ENCODE measurements at regions of chr22 and their contacts with region 1.

Region 1: GRCh38 chr22:25540166-25540907 is 24.1 kb upstream of the GRK3 start:
- DNase-seq: no peak
- ATAC-seq: no peak
- H3K4me3 ChIP-seq: no peak overlapping the region
- H3K4me3 Mint-ChIP-seq: no peak overlapping the region
- H3K27ac ChIP-seq: no peak overlapping the region
- H3K27ac Mint-ChIP-seq: no peak overlapping the region
- H3K4me1 ChIP-seq: peaks cover 8 to 10% of the 10 kb centered on the region in 2 donors
- H3K4me1 Mint-ChIP-seq: peaks cover 14% of the 10 kb centered on the region
- H3K27me3 ChIP-seq: no peaks in the 10 kb centered on the region
- H3K27me3 Mint-ChIP-seq: no peaks in the 10 kb centered on the region
- CTCF ChIP-seq: no peak

Region 2: GRCh38 chr22:25465949-25466348 is 74.4 kb before region 1 on chr22:
- CTCF ChIA-PET with region 1: interaction called, 36 read pairs
- POLR2A ChIA-PET with region 1: no interaction called
- intact Hi-C with region 1: no loop called
- DNase-seq: no peak
- ATAC-seq: no peak
- H3K4me3 ChIP-seq: no peak overlapping the region
- H3K4me3 Mint-ChIP-seq: no peak overlapping the region
- H3K27ac ChIP-seq: no peak overlapping the region
- H3K27ac Mint-ChIP-seq: no peak overlapping the region
- H3K4me1 ChIP-seq: no peaks in the 10 kb centered on the region
- H3K4me1 Mint-ChIP-seq: no peaks in the 10 kb centered on the region
- H3K27me3 ChIP-seq: no peaks in the 10 kb centered on the region
- H3K27me3 Mint-ChIP-seq: no peaks in the 10 kb centered on the region
- CTCF ChIP-seq: no peak

Region 3: DNA sequence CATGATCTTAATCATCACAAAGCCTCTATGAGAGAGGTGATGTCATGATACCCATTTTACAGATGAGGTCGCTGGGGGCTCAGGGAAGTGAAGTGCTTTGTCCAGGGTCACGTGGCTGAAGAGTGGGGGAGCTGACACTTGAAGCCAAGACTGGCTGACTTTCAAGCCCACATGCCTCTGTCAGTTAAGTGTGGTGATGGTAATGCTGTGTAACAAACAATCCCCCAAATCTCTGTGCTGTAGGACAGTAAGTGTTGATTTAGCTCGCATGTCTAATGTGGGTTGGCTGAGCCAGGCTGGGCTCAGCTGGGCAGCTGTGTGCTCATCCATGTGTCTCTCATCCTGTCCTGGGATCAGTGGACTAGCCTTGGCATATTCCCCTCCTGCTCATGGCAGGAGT is 63.0 kb before region 1 on chr22:
- CTCF ChIA-PET with region 1: no interaction called
- POLR2A ChIA-PET with region 1: no interaction called
- intact Hi-C with region 1: no loop called
- DNase-seq: no peak
- ATAC-seq: no peak
- H3K4me3 ChIP-seq: no peak overlapping the region
- H3K4me3 Mint-ChIP-seq: no peak overlapping the region
- H3K27ac ChIP-seq: no peak overlapping the region
- H3K27ac Mint-ChIP-seq: no peak overlapping the region
- H3K4me1 ChIP-seq: no peaks in the 10 kb centered on the region
- H3K4me1 Mint-ChIP-seq: no peaks in the 10 kb centered on the region
- H3K27me3 ChIP-seq: peaks cover 0 to 3% (median 0%) of the 10 kb centered on the region in 4 experiments
- H3K27me3 Mint-ChIP-seq: no peaks in the 10 kb centered on the region
- CTCF ChIP-seq: no peak

Region 4: DNA sequence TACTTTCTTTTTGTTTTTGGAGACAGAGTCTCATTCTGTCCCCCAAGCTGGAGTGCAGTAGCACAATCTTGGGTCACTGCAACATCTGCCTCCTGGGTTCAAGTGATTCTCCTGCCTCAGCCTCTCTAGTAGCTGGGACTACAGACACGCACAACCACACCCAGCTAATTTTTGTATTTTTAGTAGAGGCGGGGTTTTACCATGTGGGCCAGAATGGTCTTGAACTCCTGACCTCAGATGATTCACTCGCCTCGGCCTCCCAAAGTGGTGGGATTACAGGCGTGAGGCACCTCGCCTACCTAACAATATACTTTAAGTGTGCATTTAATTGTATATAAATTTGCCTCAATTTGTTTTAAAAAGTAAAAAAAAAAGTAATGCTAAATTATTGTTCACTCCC is 62.6 kb after region 1 on chr22:
- CTCF ChIA-PET with region 1: interaction called, 11 read pairs
- POLR2A ChIA-PET with region 1: no interaction called
- intact Hi-C with region 1: no loop called
- DNase-seq: no peak
- ATAC-seq: no peak
- H3K4me3 ChIP-seq: no peak overlapping the region
- H3K4me3 Mint-ChIP-seq: no peak overlapping the region
- H3K27ac ChIP-seq: peak overlapping the region in 1 of 2 donors; percentile 30
- H3K27ac Mint-ChIP-seq: no peak overlapping the region
- H3K4me1 ChIP-seq: peaks cover 11 to 25% of the 10 kb centered on the region in 2 donors
- H3K4me1 Mint-ChIP-seq: peaks cover 60% of the 10 kb centered on the region
- H3K27me3 ChIP-seq: no peaks in the 10 kb centered on the region
- H3K27me3 Mint-ChIP-seq: no peaks in the 10 kb centered on the region
- CTCF ChIP-seq: no peak

Region 5: DNA sequence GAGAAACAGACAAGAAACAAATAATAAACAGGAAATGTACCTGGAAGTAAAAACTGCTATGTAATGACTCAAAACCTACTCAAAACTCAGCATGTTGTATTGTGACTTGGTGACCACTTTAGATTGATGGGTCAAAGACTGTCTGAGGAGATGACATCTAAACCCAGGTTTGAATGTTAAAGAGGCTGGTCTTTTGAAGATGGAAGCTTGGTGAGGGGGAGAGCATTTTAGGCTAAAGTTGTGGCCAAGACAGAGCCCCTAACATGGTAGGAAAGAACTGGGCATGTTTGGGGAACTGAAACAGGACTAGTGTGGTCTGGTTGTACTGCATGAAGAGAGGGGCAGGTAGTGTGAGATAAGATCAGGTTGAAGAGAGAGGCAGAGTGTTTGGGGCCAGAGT is 116.4 kb after region 1 on chr22:
- CTCF ChIA-PET with region 1: interaction called, 24 read pairs
- POLR2A ChIA-PET with region 1: no interaction called
- intact Hi-C with region 1: loop called (anchors 2 kb)
- DNase-seq: peak; percentile 74
- ATAC-seq: peak; percentile 100
- H3K4me3 ChIP-seq: no peak overlapping the region
- H3K4me3 Mint-ChIP-seq: peak overlapping the region; percentile 9
- H3K27ac ChIP-seq: peak overlapping the region; percentile 49 to 64
- H3K27ac Mint-ChIP-seq: peak overlapping the region; percentile 69
- H3K4me1 ChIP-seq: peaks cover 19 to 39% of the 10 kb centered on the region in 2 donors
- H3K4me1 Mint-ChIP-seq: peaks cover 74% of the 10 kb centered on the region
- H3K27me3 ChIP-seq: no peaks in the 10 kb centered on the region
- H3K27me3 Mint-ChIP-seq: no peaks in the 10 kb centered on the region
- CTCF ChIP-seq: no peak

Region 6: GRCh38 chr22:25777870-25778269 is 237.5 kb after region 1 on chr22:
- CTCF ChIA-PET with region 1: interaction called, 79 read pairs
- POLR2A ChIA-PET with region 1: no interaction called
- intact Hi-C with region 1: loop called (anchors 1 kb)
- DNase-seq: no peak
- ATAC-seq: no peak
- H3K4me3 ChIP-seq: no peak overlapping the region
- H3K4me3 Mint-ChIP-seq: no peak overlapping the region
- H3K27ac ChIP-seq: no peak overlapping the region
- H3K27ac Mint-ChIP-seq: no peak overlapping the region
- H3K4me1 ChIP-seq: peaks cover under 1 to 3% of the 10 kb centered on the region in 2 donors
- H3K4me1 Mint-ChIP-seq: peaks cover 2% of the 10 kb centered on the region
- H3K27me3 ChIP-seq: no peaks in the 10 kb centered on the region
- H3K27me3 Mint-ChIP-seq: peaks cover 13% of the 10 kb centered on the region
- CTCF ChIP-seq: no peak